AG04450 (cell line): ENCODE measurements at regions of chr20 and their contacts with region 1.

Region 1: DNA sequence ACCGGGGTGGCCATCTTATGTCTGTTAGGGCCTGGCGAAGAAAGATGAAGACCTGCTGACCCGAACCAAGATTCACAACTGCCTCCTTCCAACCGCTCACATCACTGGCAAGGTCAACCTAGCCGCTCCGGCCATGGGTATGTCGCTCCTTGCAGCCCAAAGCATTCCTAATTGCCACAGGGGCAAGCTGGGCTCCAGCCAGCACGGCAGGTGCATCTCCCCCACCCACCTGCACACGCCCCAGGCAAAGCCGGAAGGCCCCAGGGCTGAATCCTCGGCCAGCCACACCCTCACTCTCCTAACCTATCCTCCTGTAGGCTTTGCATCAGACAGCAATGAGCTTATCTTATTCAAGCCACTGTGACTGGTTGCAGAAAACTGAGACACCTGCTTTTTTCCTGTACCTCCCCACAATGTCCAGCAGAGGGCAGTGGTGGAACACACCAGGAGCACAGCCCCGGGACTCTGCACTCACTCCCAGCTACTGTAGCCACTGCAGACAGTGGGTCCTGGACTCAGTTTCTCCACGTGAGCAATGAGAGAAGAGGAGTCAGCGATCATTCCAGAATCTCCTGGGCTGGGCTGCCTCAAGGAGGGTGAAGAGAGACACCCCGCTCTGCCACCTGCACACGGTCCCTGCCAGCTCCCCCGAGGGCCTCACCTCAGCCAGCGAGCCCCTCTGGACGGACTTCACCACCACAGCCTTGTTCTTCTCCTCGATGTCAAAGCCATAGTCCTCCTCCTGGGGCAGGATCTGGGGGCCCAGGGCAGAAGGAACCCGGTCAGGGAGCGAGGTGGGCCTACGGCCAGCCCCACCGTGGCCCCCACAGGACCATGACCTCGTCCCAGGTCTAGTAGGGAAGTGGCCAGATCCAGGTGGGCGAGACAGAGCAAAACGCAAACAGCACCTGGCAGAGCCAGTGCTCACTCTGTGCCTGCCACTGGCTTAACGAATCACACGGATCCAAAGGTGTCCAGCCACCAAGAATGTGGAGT is 170.0 kb downstream of the PREX1 start:
- DNase-seq: peak; percentile 53
- H3K4me3 ChIP-seq: no peak overlapping the region
- H3K27ac ChIP-seq: no peak overlapping the region
- H3K27me3 ChIP-seq: peaks cover 3% of the 10 kb centered on the region
- CTCF ChIP-seq: peak; percentile 97

Region 2: DNA sequence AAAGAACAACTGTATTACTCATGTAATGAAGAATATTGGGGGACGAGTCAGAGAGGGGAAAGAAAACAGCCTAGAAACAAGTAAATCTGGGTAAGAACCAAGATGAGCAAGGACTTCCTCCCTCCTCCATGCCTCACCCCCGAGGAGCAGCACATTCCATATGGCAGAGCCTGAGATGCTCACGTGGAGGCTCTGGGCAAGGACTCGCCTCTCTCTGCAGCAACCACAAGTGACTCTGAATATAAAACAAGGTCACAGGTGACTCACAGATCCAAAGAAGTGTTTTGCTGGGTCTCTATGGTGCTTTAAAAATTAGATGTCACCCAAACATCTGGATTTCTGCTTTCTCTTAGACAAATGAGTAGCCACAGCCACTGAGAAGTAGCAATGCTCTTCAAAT is 419.4 kb before region 1 on chr20:
- CTCF ChIA-PET with region 1: no interaction called
- POLR2A ChIA-PET with region 1: no interaction called
- DNase-seq: no peak
- H3K4me3 ChIP-seq: no peak overlapping the region
- H3K27ac ChIP-seq: no peak overlapping the region
- H3K27me3 ChIP-seq: peaks cover 5% of the 10 kb centered on the region
- CTCF ChIP-seq: no peak

Region 3: DNA sequence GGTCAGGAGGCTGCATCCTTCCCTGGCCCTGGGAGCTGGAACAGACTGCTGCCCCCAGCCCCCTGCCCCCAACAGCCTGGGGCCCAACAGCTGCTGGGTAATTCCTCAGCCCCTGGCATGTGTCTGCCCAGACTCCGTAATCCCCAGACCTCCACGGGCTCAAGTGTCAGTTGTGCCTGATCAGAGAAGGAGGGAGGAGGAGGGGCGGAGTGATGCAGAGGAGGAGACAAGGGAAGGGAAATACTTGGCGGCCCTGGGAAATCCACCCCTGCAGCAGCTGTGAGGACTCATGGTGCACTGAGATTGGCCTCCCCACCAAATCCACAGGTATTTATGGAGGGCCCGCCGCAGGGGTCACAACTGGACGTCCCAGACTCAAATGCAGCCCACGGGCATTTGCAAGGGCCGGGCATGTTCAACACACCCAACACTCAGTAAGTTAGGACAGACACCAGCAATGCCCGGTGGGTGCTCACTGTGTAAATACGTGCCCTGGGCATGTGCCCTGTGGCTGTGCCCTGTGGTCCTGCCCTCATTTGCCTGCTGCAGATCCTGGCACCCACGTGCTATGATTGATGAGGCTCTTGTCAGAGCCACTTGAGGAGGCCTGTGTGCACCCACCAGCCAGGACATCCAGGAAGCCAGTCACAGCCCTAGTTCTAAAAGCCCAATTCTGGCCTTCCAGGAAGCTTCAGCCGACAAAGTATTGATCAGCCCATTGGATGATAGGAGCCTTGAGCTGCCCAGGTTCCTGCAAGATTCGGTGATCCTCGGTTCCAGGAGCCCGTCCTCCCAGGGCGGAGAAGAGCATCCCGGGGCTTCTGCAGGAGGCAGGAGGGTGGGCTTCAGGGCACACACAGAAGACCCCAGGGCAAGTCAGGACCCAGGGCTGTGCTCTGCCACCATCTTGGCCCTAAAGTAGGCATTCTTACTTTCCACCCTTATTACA is 54.1 kb before region 1 on chr20:
- CTCF ChIA-PET with region 1: no interaction called
- POLR2A ChIA-PET with region 1: no interaction called
- DNase-seq: no peak
- H3K4me3 ChIP-seq: no peak overlapping the region
- H3K27ac ChIP-seq: no peak overlapping the region
- H3K27me3 ChIP-seq: no peaks in the 10 kb centered on the region
- CTCF ChIP-seq: no peak

Region 4: GRCh38 chr20:48642105-48642504 is 15.7 kb before region 1 on chr20:
- CTCF ChIA-PET with region 1: interaction called, 12 read pairs
- POLR2A ChIA-PET with region 1: no interaction called
- DNase-seq: no peak
- H3K4me3 ChIP-seq: no peak overlapping the region
- H3K27ac ChIP-seq: no peak overlapping the region
- H3K27me3 ChIP-seq: peaks cover 3% of the 10 kb centered on the region
- CTCF ChIP-seq: no peak

Region 5: GRCh38 chr20:48682529-48683251 is 24.9 kb after region 1 on chr20:
- CTCF ChIA-PET with region 1: interaction called, 11 read pairs
- POLR2A ChIA-PET with region 1: interaction called, 4 read pairs
- DNase-seq: peak; percentile 93
- H3K4me3 ChIP-seq: peak overlapping the region; percentile 35
- H3K27ac ChIP-seq: peak overlapping the region; percentile 77
- H3K27me3 ChIP-seq: no peaks in the 10 kb centered on the region
- CTCF ChIP-seq: no peak

Region 6: DNA sequence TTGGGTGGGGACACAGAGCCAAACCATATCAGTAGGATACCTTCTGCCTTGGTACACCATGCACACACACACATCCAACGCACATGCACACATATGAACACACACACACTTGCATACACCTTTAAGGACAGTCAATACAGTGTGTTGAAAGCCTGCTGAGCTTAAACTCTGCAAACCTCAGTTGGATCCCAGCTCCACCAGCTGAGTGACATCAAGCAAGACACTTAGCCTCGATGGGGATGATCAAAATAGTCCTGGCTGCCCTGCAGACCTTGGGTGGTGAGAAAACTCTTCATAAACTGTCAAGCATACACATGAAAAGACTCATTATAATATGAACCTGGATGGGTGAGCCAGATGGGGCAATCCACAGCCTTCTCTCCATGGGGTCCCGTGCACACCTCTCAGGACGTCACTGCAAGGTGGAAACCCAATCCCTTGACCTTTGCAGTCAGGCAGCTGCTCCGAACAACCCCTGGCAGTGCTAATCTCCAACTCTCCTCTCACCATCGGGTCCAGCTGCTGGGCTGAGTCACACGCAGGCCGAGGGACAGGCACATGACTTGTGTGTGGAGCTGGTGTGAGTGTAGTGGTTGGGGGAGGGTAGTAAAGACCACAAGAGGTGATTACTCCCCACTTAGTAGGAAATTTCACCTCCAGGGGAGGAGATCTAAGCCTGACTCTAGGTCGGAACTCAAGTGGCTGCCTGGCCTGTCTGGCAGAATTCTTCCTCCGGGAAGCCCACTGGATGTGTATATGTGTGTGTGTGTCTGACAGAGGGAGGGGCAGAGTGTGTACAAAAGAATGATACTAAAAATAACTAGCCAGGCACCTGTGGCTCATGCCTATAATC is 196.0 kb after region 1 on chr20:
- CTCF ChIA-PET with region 1: interaction called, 11 read pairs
- POLR2A ChIA-PET with region 1: no interaction called
- DNase-seq: peak; percentile 11
- H3K4me3 ChIP-seq: no peak overlapping the region
- H3K27ac ChIP-seq: no peak overlapping the region
- H3K27me3 ChIP-seq: peaks cover 4% of the 10 kb centered on the region
- CTCF ChIP-seq: no peak

Region 7: GRCh38 chr20:48897246-48897994 is 239.6 kb after region 1 on chr20:
- CTCF ChIA-PET with region 1: interaction called, 13 read pairs
- POLR2A ChIA-PET with region 1: no interaction called
- DNase-seq: peak; percentile 47
- H3K4me3 ChIP-seq: no peak overlapping the region
- H3K27ac ChIP-seq: no peak overlapping the region
- H3K27me3 ChIP-seq: peaks cover 4% of the 10 kb centered on the region
- CTCF ChIP-seq: no peak

Region 8: DNA sequence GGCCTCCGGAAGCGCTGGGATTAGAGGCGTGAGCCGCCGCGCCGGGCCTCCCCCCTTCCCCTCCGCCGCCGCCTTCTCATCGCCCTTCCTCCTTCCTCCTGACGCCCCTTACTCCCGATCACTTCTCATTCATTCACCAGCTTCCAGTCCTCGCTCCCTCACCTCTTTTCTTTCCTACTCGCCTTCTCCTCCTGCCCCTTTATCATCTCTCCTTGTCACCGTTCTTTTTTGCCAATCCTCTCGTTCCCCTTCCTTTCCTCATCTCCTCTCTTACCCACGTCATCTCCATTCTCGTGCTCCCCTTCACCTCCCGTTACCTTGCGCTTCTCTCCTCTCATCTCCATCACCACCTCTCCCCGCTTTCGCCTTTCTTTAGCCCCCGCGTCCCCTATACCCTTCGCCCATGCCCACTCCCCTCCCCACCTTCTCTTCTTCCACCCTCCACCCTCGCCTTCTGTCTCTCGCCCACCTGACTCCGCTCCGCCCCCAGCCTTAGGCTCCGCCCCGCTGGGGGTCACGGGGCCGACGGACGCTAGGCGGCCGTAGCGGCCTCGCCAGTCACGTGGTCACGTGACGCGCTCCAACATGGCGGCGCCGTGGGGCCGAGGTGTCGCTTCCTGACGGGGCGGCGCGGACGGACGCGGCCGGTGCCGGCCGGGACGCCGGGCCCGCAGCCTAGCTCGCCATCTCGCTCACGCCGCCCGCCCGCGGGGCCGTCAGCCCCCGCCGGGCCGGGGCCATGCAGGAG is 263.6 kb after region 1 on chr20 and contains the start of gene ARFGEF2:
- CTCF ChIA-PET with region 1: interaction called, 12 read pairs
- POLR2A ChIA-PET with region 1: no interaction called
- DNase-seq: peak; percentile 56
- H3K4me3 ChIP-seq: peak within 1 kb of the TSS; percentile 95
- H3K27ac ChIP-seq: peak within 1 kb of the TSS; percentile 75
- H3K27me3 ChIP-seq: peaks cover 6% of the 10 kb centered on the region
- CTCF ChIP-seq: no peak
- polyA plus RNA-seq, gene ARFGEF2: 20.5 and 22.3 TPM in 2 replicates